ENCODE measurements at regions of chr1 and their contacts with region 1.

Region 1: DNA sequence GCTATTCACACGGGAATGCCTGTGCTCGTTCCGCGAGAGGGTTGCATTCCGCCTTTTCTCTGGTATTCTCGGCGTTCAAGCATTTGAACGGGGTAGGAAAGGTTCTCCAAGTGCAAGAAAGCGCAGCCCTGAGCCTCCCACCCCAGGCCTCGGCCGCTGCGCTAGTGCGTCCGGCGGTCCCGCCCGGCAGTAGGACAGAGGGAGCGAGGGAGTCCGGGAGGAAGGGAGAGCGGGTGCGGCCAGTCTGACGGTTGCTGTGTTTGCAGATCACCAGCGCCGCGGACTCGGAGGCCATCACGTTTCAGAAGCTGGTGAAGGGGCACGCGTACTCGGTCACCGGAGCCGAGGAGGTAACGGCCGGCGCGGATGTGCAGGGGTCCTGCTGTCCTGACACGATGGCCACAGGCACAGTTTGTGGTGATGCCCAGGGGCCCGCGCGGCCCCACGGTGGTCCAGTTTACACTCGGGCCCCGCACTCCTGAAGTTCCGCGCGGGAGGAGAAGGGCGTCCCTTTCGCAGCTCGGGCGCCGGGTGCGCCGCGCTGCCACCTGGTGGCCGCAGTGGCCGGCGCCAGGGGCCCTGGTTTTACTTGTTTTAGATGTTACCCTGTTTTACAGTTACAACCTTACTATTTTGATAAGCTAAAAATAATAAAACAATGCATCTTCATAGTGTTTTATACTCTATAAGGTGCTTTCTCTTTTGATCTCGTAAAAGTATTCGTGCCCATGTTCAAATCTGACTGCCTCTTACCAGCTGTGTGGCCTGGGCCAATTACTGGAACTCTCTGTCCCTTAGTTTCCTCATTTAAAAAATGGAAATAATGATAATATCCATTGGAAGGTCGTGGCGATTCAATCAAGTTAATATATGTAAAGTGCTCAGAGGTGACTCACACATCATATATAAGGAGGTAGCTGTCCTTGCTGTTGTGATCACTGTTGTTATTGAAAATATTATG is 36.7 kb downstream of the CAPN2 start:
- DNase-seq: peak; percentile 42 to 95
- H3K4me3 ChIP-seq: no peak overlapping the region
- CTCF ChIP-seq: peak in 1 of 3 donors; percentile 60
- POLR2A ChIP-seq: no peak

Region 2: DNA sequence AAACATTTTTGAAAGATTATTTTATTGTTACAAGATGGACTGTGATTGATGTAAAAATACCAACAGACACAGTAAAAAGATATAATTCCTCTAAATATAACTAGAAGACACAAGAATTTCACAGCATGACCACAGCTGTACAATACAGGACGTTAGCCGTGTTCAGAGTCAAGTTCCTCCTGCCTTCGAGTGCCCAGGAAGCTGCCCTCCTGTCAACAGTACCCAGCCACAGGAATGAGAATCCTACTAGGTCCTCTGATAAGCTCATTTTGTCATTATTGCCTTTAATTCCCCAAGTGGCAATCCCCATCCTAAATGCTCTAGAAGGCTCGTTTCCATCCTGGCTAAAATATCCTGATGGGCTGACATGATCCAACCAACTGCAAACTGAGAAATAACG is 53.1 kb before region 1 on chr1:
- intact Hi-C with region 1: loop called (anchors 5 kb)
- DNase-seq: no peak
- H3K4me3 ChIP-seq: no peak overlapping the region
- CTCF ChIP-seq: no peak
- POLR2A ChIP-seq: no peak

Region 3: DNA sequence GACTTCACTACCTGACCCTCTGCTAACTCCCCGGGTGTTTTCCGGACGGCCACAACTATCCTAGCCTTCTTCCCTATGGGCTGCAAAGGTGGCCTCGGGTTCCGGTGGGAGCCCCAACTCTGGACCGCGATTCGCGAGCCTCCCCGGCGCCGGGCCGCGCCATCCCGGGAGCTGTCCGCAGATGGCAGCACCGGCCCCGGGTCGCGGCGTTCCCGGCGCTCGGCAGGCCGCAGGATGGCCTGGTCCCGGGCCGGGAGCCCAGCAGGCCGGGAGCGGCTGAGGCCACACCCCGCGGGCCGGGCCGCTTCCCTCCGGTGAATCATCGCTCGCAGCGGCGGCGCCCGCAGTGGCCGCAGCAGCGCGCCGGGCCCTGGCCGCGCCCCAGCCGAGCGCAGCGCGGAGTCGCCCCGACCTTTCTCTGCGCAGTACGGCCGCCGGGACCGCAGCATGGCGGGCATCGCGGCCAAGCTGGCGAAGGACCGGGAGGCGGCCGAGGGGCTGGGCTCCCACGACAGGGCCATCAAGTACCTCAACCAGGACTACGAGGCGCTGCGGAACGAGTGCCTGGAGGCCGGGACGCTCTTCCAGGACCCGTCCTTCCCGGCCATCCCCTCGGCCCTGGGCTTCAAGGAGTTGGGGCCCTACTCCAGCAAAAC is 36.7 kb before region 1 on chr1 and contains the start of gene CAPN2:
- intact Hi-C with region 1: loop called (anchors 5 kb)
- DNase-seq: peak; percentile 64 to 96
- H3K4me3 ChIP-seq: peak within 1 kb of the TSS; percentile 83
- CTCF ChIP-seq: no peak
- POLR2A ChIP-seq: no peak
- total RNA-seq, gene CAPN2: 33.7 to 73.3 (median 47.2) TPM

Measured in lower leg skin (tissue), 4 donors.